ENCODE measurements at regions of chr7 and their contacts with region 1.

Region 1: GRCh38 chr7:125445836-125446235 is 516.2 kb upstream of the POT1 start:
- DNase-seq: no peak
- ATAC-seq: no peak
- H3K4me3 ChIP-seq: no peak overlapping the region
- H3K4me3 Mint-ChIP-seq: no peak overlapping the region
- H3K27ac ChIP-seq: no peak overlapping the region
- H3K27ac Mint-ChIP-seq: no peak overlapping the region
- H3K4me1 ChIP-seq: no peaks in the 10 kb centered on the region
- H3K4me1 Mint-ChIP-seq: no peaks in the 10 kb centered on the region
- H3K27me3 ChIP-seq: no peaks in the 10 kb centered on the region
- H3K27me3 Mint-ChIP-seq: no peaks in the 10 kb centered on the region

Region 2: GRCh38 chr7:124723012-124723411 is 722.8 kb before region 1 on chr7:
- CTCF ChIA-PET with region 1: no interaction called
- POLR2A ChIA-PET with region 1: no interaction called
- intact Hi-C with region 1: no loop called
- DNase-seq: no peak
- ATAC-seq: no peak
- H3K4me3 ChIP-seq: no peak overlapping the region
- H3K4me3 Mint-ChIP-seq: no peak overlapping the region
- H3K27ac ChIP-seq: no peak overlapping the region
- H3K27ac Mint-ChIP-seq: no peak overlapping the region
- H3K4me1 ChIP-seq: no peaks in the 10 kb centered on the region
- H3K4me1 Mint-ChIP-seq: no peaks in the 10 kb centered on the region
- H3K27me3 ChIP-seq: no peaks in the 10 kb centered on the region
- H3K27me3 Mint-ChIP-seq: peaks cover 0 to 5% (median 0%) of the 10 kb centered on the region in 5 donors

Region 3: DNA sequence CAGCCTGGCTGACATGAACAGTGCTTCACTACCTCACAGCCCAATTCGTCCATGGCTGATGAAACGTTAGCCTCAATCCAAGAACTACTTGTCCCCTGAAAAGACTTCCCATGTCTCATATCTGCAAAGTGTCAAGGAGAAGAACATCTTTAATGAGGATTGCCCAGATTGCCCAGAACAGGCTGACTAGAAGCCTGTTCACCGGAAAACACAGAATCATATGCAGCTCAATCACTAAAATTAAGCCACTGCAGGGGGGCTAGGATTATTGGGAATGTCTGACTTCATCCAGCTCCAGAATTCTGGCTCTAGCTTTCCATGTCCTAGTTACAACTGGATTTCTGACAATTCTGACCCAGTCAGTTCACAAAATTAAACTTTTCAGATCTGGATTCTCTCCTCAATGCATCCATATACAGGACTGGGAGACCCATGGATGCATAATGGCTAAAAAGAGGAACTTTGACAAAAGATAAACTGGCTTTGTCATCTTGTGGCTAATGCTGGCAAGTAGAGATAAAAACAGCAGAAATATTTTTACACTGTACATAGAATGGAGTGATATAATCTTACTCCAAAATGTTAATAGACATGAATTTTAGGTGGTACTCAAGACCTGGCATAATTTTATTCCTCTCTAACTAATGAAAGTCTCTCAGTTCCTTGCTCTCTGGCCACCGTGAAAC is 49.2 kb before region 1 on chr7:
- CTCF ChIA-PET with region 1: no interaction called
- POLR2A ChIA-PET with region 1: no interaction called
- intact Hi-C with region 1: loop called in 1 of 2 experiments (anchors 5 kb)
- DNase-seq: no peak
- ATAC-seq: peak; percentile 63
- H3K4me3 ChIP-seq: no peak overlapping the region
- H3K4me3 Mint-ChIP-seq: no peak overlapping the region
- H3K27ac ChIP-seq: no peak overlapping the region
- H3K27ac Mint-ChIP-seq: no peak overlapping the region
- H3K4me1 ChIP-seq: no peaks in the 10 kb centered on the region
- H3K4me1 Mint-ChIP-seq: peaks cover 0 to 2% (median 0%) of the 10 kb centered on the region in 7 donors
- H3K27me3 ChIP-seq: no peaks in the 10 kb centered on the region
- H3K27me3 Mint-ChIP-seq: no peaks in the 10 kb centered on the region